GM12878 (cell line): ENCODE measurements at regions of chr11 and their contacts with region 1.

Region 1: GRCh38 chr11:65919146-65920033 is at the start of gene DRAP1:
- DNase-seq: peak; percentile 64
- ATAC-seq: peak; percentile 95
- H3K4me3 ChIP-seq: peak within 1 kb of the TSS; percentile 82
- H3K27ac ChIP-seq: peak within 1 kb of the TSS; percentile 91
- H3K4me1 ChIP-seq: peaks cover 22% of the 10 kb centered on the region
- H3K27me3 ChIP-seq: no peaks in the 10 kb centered on the region
- CTCF ChIP-seq: no peak; a peak in 1 of 6 replicates
- EP300 ChIP-seq: peak in 1 of 2 experiments; percentile 55; a peak in 1 of 4 replicates
- POLR2A ChIP-seq: peak; percentile 55
- RAD21 ChIP-seq: no peak
- polyA plus RNA-seq, gene DRAP1: 9.4 to 35.8 TPM

Region 2: DNA sequence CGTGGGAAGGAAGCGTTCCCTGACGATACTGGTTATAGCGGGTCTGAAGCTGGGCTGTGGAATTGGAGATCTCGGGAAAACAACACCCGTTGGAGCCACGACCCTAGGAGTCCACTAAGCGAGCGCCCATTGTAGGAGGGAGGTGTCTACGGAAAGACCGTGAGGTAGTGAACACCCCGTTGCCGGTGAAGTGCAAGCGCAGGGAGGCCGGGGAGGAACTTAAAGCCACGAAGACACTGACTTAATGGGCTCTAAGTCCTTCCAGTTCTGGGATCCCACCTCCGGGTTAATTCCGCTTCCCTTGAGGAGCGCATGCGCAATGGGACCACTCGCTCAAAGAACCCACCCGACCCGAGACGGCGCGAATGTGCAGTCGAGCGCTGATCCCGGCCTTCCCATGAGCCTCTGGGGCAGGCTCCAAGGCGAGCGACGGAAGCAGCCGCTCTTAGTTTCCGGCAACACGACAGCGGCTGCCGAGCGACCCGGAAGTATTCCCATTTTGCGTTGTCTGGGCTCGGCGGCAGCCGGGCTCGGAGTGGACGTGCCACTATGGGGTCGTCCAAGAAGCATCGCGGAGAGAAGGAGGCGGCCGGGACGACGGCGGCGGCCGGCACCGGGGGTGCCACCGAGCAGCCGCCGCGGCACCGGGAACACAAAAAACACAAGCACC is 42.0 kb after region 1 on chr11 and contains the start of gene SART1:
- CTCF ChIA-PET with region 1: interaction called, 3 read pairs
- POLR2A ChIA-PET with region 1: interaction called, 3 read pairs
- RAD21 ChIA-PET with region 1: no interaction called
- SMC1A ChIA-PET with region 1: no interaction called
- in situ Hi-C with region 1: no loop called
- intact Hi-C with region 1: loop called (anchors 2 kb)
- DNase-seq: peak; percentile 94
- ATAC-seq: peak; percentile 95
- H3K4me3 ChIP-seq: peak within 1 kb of the TSS; percentile 95
- H3K27ac ChIP-seq: peak within 1 kb of the TSS; percentile 96
- H3K4me1 ChIP-seq: peaks cover 16% of the 10 kb centered on the region
- H3K27me3 ChIP-seq: no peaks in the 10 kb centered on the region
- CTCF ChIP-seq: no peak
- EP300 ChIP-seq: no peak
- POLR2A ChIP-seq: peak; percentile 92
- RAD21 ChIP-seq: no peak
- polyA plus RNA-seq, gene SART1: 6.2 to 14.8 TPM

Region 3: GRCh38 chr11:66051766-66052663 is 132.6 kb after region 1 on chr11 and contains the start of gene SF3B2:
- CTCF ChIA-PET with region 1: no interaction called
- POLR2A ChIA-PET with region 1: no interaction called
- RAD21 ChIA-PET with region 1: no interaction called
- SMC1A ChIA-PET with region 1: no interaction called
- in situ Hi-C with region 1: no loop called
- intact Hi-C with region 1: no loop called
- DNase-seq: peak; percentile 96
- ATAC-seq: peak; percentile 98
- H3K4me3 ChIP-seq: peak within 1 kb of the TSS; percentile 98
- H3K27ac ChIP-seq: peak within 1 kb of the TSS; percentile 82
- H3K4me1 ChIP-seq: peaks cover 15% of the 10 kb centered on the region
- H3K27me3 ChIP-seq: no peaks in the 10 kb centered on the region
- CTCF ChIP-seq: no peak
- EP300 ChIP-seq: no peak
- POLR2A ChIP-seq: peak; percentile 97
- RAD21 ChIP-seq: no peak
- polyA plus RNA-seq, gene SF3B2: 56.3 to 123 TPM